Naive thymus-derived CD4-positive, alpha-beta T cell (primary cell): ENCODE measurements at regions of chr19 and their contacts with region 1.

Region 1: DNA sequence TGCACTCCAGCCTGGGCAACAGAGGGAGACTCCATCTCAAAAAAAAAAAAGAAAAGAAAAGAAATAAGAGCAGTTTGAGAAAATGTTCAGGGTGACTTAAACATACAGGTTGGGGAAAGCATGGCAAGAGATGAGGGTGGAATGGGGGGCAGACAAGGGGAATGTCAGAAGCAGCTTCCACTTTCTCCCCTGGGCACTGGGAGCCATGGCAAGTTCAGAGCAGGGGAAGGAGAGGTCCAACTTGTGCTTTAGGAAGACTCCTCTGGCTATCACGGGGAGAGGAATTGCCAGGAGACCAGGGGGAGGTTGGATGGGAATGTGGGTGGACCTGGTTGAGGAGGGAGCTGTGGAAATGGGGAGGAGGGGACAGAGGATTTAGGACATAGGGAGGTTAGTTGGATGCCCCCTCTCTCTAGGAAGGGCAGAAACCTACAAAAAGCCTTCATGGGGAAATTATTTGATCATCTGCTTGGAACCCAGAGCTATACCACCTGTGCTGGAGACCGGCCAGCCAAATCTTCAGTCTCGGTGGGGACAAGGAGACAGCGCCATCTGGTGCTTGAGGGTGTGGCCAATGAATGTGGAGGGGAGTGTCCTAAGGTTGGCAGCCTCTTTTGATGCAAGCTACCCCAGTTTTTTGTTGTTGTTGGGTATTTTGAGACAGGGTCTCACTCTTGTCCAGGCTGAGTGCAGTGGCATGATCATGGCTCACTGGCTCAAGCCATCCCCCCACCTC is 7.3 kb upstream of the STRN4 start:
- DNase-seq: peak; percentile 49 to 68 (median 65)
- ATAC-seq: peak; percentile 91
- H3K4me3 ChIP-seq: no peak overlapping the region
- H3K4me3 Mint-ChIP-seq: no peak overlapping the region
- H3K27ac ChIP-seq: no peak overlapping the region
- H3K27ac Mint-ChIP-seq: peak overlapping the region in 2 of 9 donors; percentile 45 to 65
- H3K4me1 ChIP-seq: no peaks in the 10 kb centered on the region
- H3K4me1 Mint-ChIP-seq: peaks cover 6 to 21% (median 13%) of the 10 kb centered on the region in 7 donors
- H3K27me3 ChIP-seq: no peaks in the 10 kb centered on the region
- H3K27me3 Mint-ChIP-seq: no peaks in the 10 kb centered on the region

Region 2: DNA sequence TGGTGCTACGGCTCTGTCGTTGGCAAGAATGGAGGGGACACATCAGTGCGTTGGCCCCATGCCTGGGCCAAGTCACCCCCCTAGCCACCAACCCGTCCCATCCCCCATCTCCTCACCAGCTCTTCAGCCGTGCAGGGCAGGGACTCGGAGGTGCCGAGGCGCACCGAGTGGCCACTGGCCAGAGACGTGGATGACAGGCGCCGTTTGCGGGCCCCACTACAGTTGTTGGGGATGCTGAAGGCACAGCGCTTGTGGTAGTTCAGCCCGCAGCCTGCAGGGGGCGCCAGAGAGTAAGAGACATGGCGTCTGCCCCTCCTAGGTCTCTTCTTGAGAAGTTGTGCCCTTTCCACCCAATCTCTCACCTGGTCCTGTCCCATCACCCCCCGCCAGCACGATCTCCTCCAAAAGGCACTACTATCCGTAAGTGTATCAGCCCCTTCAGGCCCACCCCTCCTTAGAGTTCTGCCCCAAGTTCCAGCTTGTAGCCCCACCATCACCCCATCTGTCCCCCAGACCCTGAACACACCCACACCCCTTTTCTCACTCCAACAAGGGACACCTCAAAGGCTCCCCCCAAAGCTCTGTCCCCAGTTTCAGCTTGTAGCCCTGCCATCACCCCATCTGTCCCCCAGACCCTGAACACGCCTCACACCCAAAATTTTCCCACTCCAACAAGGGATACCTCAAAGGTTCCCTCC is 49.1 kb before region 1 on chr19:
- CTCF ChIA-PET with region 1: interaction called, 10 read pairs
- POLR2A ChIA-PET with region 1: no interaction called
- intact Hi-C with region 1: loop called in 1 of 2 experiments (anchors 1 kb)
- DNase-seq: peak; percentile 69 to 93 (median 82)
- ATAC-seq: peak; percentile 98
- H3K4me3 ChIP-seq: no peak overlapping the region
- H3K4me3 Mint-ChIP-seq: peak overlapping the region in 1 of 10 donors; percentile 35
- H3K27ac ChIP-seq: no peak overlapping the region
- H3K27ac Mint-ChIP-seq: peak overlapping the region; percentile 16 to 90 (median 68)
- H3K4me1 ChIP-seq: peaks cover 0 to 4% of the 10 kb centered on the region in 2 donors
- H3K4me1 Mint-ChIP-seq: peaks cover 7 to 17% (median 12%) of the 10 kb centered on the region in 7 donors
- H3K27me3 ChIP-seq: no peaks in the 10 kb centered on the region
- H3K27me3 Mint-ChIP-seq: no peaks in the 10 kb centered on the region

Region 3: GRCh38 chr19:46788262-46788967 is 34.8 kb after region 1 on chr19 and contains the start of gene SLC1A5:
- CTCF ChIA-PET with region 1: interaction called, 7 read pairs
- POLR2A ChIA-PET with region 1: interaction called, 3 read pairs
- intact Hi-C with region 1: loop called in 1 of 2 experiments (anchors 1 kb)
- DNase-seq: peak; percentile 77 to 98 (median 84)
- ATAC-seq: peak; percentile 93
- H3K4me3 ChIP-seq: peak within 1 kb of the TSS; percentile 77
- H3K4me3 Mint-ChIP-seq: peak within 1 kb of the TSS; percentile 85 to 91 (median 89)
- H3K27ac ChIP-seq: peak within 1 kb of the TSS; percentile 62
- H3K27ac Mint-ChIP-seq: peak within 1 kb of the TSS; percentile 25 to 92 (median 86)
- H3K4me1 ChIP-seq: peaks cover 31 to 44% of the 10 kb centered on the region in 2 donors
- H3K4me1 Mint-ChIP-seq: peaks cover 19 to 72% (median 60%) of the 10 kb centered on the region in 7 donors
- H3K27me3 ChIP-seq: no peaks in the 10 kb centered on the region
- H3K27me3 Mint-ChIP-seq: peaks cover 0 to 3% (median 0%) of the 10 kb centered on the region in 5 donors
- total RNA-seq, gene SLC1A5: 3.5 to 120 (median 5.3) TPM

Region 4: GRCh38 chr19:46990991-46991676 is 237.5 kb after region 1 on chr19:
- CTCF ChIA-PET with region 1: no interaction called
- POLR2A ChIA-PET with region 1: no interaction called
- intact Hi-C with region 1: loop called in 1 of 2 experiments (anchors 1 kb)
- DNase-seq: peak in 8 of 9 donors; percentile 21 to 63 (median 31)
- ATAC-seq: peak; percentile 66
- H3K4me3 ChIP-seq: no peak overlapping the region
- H3K4me3 Mint-ChIP-seq: peak overlapping the region in 1 of 10 donors; percentile 19
- H3K27ac ChIP-seq: no peak overlapping the region
- H3K27ac Mint-ChIP-seq: peak overlapping the region in 2 of 9 donors; percentile 28 to 49
- H3K4me1 ChIP-seq: peaks cover 3 to 9% of the 10 kb centered on the region in 2 donors
- H3K4me1 Mint-ChIP-seq: peaks cover 5 to 15% (median 11%) of the 10 kb centered on the region in 7 donors
- H3K27me3 ChIP-seq: no peaks in the 10 kb centered on the region
- H3K27me3 Mint-ChIP-seq: no peaks in the 10 kb centered on the region